HCT116 (cell line): ENCODE measurements at regions of chr19 and their contacts with region 1.

Region 1: DNA sequence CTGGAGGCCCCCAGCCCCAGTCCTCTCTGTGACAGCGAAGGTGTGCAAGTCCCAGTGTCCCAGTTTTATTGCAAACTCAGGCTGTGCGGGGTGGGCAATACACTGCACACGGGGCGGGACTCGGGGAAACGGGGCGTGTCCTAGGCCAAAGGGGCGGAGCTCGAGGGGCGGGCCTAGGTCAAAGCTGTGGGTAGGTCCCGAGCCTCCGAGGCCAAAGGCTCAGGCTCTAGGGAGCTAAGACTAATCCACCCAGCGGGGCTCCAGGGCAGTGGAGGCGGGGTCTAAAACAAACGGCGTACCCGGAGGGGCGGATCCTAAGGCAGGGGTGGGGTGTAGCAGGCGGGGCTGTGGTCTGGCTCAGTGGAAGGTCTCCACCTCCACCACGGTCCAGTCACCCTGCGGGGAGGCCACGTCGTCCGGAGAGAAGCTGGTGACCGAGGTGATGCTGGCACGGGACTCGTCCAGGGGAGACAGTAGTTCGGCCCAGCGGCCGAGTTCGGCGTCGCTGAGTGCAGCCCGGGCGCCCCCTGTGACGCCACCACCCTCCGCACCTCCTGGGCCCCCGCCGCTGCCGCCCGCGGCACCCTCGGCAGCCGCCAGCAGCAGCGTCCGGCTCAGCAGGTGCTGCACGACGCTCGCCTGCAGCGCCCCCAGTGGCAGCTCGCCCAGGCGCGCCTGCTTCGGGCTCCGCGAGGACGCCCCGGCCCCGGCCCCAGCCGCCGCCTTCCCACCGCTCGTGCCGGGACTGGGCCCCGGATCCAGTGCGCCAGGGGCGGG is 5.3 kb downstream of the PRR36 start:
- DNase-seq: peak; percentile 92
- ATAC-seq: peak; percentile 59
- H3K4me3 ChIP-seq: peak overlapping the region; percentile 46 to 58
- H3K27ac ChIP-seq: peak overlapping the region; percentile 86
- H3K4me1 ChIP-seq: peaks cover 26 to 67% of the 10 kb centered on the region in 2 experiments
- H3K27me3 ChIP-seq: no peaks in the 10 kb centered on the region
- CTCF ChIP-seq: peak in 2 of 3 experiments; percentile 63 to 65; a peak in 4 of 6 replicates
- POLR2A ChIP-seq: no peak
- RAD21 ChIP-seq: no peak

Region 2: DNA sequence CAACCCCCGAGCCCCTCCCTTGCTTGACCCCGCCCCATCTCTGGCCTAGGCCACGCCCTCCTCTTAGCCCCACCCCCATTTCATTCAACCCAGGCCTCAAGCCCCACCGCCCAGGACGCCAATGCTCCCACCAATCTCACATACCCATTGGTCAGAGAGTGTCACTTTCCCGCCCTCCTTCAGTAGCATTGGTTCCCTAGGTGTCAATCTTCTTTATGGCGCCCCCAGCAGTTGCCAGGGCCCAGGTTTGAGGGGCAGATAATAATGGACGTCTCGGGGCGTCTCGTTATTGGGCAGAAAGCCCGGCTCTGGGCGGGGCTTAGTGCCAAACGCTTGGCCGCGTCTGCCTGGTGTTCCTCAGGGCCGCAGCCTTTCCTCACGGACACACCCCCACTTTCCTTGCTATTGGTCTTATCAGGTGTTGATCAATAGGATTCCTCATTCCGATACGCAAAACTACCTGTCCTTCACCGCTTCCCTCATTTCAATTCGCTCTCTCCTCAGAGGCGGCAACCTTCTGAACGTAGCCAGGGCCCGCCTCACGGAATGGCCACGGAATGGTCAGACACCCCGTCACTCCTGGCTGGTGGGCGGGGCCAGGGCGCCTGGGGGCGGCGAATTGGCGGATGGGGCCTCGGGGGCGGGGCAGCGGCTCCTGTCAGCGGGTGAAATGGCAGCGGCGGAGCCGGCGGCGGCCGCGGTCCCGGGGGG is 39.1 kb before region 1 on chr19 and contains the start of gene EVI5L:
- CTCF ChIA-PET with region 1: interaction called, 21 read pairs
- POLR2A ChIA-PET with region 1: interaction called, 3 read pairs
- RAD21 ChIA-PET with region 1: no interaction called
- intact Hi-C with region 1: no loop called
- DNase-seq: peak; percentile 100
- ATAC-seq: peak; percentile 84
- H3K4me3 ChIP-seq: peak within 1 kb of the TSS; percentile 61
- H3K27ac ChIP-seq: peak within 1 kb of the TSS; percentile 40
- H3K4me1 ChIP-seq: peaks cover 43 to 53% of the 10 kb centered on the region in 2 experiments
- H3K27me3 ChIP-seq: no peaks in the 10 kb centered on the region
- CTCF ChIP-seq: no peak
- POLR2A ChIP-seq: no peak
- RAD21 ChIP-seq: no peak
- total RNA-seq, gene EVI5L: 15.0 TPM

Region 3: GRCh38 chr19:7888145-7888825 is 19.4 kb after region 1 on chr19 and contains the start of gene LRRC8E:
- CTCF ChIA-PET with region 1: interaction called, 14 read pairs
- POLR2A ChIA-PET with region 1: interaction called, 6 read pairs
- RAD21 ChIA-PET with region 1: no interaction called
- intact Hi-C with region 1: no loop called
- DNase-seq: no peak
- ATAC-seq: peak; percentile 98
- H3K4me3 ChIP-seq: peak within 1 kb of the TSS; percentile 81 to 94
- H3K27ac ChIP-seq: peak within 1 kb of the TSS; percentile 76
- H3K4me1 ChIP-seq: peaks cover 13 to 42% of the 10 kb centered on the region in 2 experiments; a peak in 3 of 4 replicates
- H3K27me3 ChIP-seq: no peaks in the 10 kb centered on the region
- CTCF ChIP-seq: no peak
- POLR2A ChIP-seq: no peak
- RAD21 ChIP-seq: no peak
- total RNA-seq, gene LRRC8E: 18.1 TPM

Region 4: GRCh38 chr19:7919610-7920518 is 51.0 kb after region 1 on chr19 and contains the start of gene SNAPC2:
- CTCF ChIA-PET with region 1: interaction called, 41 read pairs
- POLR2A ChIA-PET with region 1: interaction called, 33 read pairs
- RAD21 ChIA-PET with region 1: interaction called, 7 read pairs
- intact Hi-C with region 1: loop called (anchors 1 kb)
- DNase-seq: peak; percentile 92
- ATAC-seq: peak; percentile 61
- H3K4me3 ChIP-seq: peak within 1 kb of the TSS; percentile 66 to 74
- H3K27ac ChIP-seq: peak within 1 kb of the TSS; percentile 89
- H3K4me1 ChIP-seq: peaks cover 21 to 61% of the 10 kb centered on the region in 2 experiments; a peak in 3 of 4 replicates
- H3K27me3 ChIP-seq: no peaks in the 10 kb centered on the region
- CTCF ChIP-seq: no peak
- POLR2A ChIP-seq: no peak
- RAD21 ChIP-seq: no peak
- total RNA-seq, gene SNAPC2: 42.9 TPM

Region 5: GRCh38 chr19:8174706-8175105 is 305.8 kb after region 1 on chr19:
- CTCF ChIA-PET with region 1: no interaction called
- POLR2A ChIA-PET with region 1: no interaction called
- RAD21 ChIA-PET with region 1: no interaction called
- intact Hi-C with region 1: no loop called
- DNase-seq: no peak
- ATAC-seq: no peak
- H3K4me3 ChIP-seq: no peak overlapping the region
- H3K27ac ChIP-seq: no peak overlapping the region
- H3K4me1 ChIP-seq: no peaks in the 10 kb centered on the region
- H3K27me3 ChIP-seq: no peaks in the 10 kb centered on the region
- CTCF ChIP-seq: no peak
- POLR2A ChIP-seq: no peak
- RAD21 ChIP-seq: no peak